HEK293T (cell line): ENCODE measurements at regions of chr2 and their contacts with region 1.

Region 1: DNA sequence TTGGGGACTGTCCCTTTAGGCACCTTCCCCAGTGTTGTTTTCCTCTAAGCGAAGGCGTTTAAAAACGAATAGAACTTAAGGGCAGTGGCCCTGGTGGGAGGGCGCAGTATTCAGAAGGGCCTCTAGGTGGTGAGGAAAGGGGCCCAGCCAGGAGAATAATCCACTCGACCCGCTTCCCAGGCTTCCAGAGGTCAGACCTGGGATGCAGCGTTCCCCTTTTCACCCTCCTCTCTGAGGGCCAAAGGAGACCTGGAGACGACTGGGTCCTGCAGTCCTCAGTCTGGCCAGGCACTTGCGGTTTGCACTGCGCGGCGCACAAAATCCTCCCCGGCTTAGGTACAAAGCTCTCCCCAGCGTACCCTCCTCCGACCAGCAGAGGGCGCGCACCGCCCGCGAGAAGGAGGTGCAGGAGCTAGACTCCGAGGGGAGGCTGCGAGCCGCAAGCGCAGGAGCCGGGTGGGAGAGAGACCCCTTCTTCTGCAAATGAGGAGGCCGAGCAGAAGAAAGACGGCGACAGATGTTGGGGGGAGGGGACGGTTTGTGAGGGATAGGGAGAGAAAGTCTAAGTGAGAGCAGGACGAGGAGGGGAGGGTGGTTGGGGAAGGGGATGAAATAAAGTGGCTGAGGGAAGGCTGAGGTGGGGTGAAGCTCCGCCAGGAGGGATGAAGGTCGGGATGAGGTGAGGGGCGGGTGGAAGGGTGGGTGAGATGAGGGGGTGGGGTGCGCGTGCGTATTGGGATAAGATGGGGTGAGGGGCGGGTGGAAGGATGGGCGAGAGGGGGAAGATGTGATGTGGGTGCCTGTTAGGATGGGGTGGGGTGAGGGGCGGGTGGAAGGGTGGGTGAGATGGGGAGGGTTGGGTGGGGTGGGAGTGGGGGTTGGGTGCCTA is 4.9 kb downstream of the FEV start:
- DNase-seq: peak; percentile 88

Region 2: DNA sequence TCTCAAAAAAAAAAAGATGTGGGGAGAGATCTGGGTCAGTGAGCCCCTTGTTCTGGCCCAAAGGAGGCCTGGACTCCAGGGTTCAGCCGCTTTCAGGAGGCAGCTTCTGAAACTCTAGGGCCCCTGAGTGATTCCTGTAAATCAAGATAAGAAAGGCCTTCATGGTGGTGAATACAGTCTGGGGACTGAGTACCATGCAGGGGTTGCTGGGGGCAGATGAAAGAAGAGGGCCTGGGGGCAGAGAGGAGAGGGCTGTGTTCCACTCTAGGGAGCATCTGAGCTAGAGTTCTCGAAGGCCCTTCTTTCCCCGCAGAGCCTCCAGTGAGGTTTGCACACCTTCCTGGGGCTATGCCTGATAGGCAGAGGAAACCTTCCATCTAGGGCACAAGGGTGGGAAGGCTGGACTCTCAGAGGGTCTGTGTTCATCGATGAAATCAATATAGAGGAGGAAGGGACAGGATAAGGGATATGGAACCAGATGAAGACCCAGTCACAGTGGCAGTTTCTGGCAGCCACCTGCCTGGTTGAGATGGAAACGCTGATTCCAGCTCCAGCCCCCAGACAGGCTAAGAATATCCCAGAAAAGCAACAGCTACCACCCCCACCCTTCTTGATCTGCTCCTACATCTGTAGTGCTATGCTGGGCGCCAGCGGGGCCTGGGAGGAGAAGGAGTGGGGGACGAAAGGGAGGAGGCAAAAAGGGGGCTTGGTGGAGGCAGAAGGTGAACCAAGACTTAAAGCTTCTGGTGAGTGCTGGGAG is 25.4 kb before region 1 on chr2:
- CTCF ChIA-PET with region 1: interaction called, 10 read pairs
- POLR2A ChIA-PET with region 1: interaction called, 5 read pairs
- DNase-seq: no peak

Region 3: DNA sequence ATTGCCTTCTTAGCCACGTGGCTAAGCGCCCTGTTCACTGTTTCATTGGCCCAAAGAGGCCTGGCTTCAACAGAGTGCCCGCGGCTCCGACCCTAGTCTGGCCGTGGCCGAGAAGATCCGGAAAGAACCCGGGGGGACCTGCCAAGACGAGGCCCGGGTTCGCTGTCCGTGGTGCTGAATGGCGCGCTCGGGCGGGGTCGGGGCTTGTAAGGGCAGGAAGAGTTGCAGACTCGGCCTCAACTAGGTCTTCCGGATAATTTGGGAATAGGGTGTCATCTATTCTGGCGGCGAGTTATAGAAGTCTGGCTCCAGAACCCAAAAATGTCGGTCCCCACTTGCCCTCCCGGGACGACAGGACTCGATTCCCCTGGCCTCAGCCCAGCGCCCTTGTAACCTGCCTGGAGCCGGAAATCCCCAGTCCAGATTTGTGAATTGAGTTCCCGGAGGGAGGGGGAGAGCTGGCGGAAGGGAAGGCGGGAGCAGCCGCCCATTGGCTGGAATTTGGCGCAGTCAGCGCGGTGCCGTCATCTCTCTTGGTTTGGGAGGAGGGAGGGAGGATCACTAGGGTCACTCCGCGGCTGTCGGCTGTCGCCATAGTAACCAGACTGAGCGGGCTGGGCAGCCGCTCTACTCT is 17.1 kb before region 1 on chr2:
- CTCF ChIA-PET with region 1: interaction called, 11 read pairs
- POLR2A ChIA-PET with region 1: interaction called, 5 read pairs
- DNase-seq: peak; percentile 70

Region 4: DNA sequence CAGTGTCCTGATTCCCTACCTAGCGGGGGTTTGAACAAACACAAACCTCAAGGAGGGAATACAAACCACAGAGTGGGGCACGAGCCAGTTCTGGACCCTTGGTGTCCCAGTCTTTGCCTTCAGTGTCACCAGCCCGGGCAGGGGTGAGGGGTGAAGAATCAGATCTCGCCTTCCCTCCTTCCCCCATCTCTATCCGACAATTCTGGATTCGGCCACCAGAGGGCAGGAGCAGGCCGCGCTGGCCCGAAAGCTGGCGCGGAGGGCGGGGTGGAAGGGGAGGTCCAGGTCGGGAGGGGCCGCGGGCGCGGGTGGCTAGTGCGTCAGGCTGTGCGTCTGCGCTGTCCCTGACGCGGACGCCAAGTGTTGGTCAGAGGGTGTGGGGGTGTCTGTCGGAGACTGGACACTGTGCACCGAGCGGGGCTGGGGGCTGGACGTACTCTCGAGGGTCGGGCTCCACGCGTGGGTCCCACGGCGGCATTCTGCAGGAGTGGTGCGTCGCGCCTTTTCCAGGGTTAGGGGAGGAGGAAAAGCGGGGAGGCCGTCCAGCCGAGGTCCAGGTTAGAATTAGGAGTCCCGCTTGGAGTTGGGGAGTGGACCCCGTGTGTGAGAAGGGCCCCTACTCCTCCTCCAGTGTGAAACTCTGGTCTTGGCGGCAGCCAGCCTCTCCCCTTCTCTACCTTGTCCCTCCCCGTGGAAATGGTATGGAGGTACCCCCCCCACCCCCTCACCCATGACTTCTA is 16.1 kb after region 1 on chr2:
- CTCF ChIA-PET with region 1: interaction called, 21 read pairs
- POLR2A ChIA-PET with region 1: no interaction called
- DNase-seq: peak; percentile 94

Region 5: DNA sequence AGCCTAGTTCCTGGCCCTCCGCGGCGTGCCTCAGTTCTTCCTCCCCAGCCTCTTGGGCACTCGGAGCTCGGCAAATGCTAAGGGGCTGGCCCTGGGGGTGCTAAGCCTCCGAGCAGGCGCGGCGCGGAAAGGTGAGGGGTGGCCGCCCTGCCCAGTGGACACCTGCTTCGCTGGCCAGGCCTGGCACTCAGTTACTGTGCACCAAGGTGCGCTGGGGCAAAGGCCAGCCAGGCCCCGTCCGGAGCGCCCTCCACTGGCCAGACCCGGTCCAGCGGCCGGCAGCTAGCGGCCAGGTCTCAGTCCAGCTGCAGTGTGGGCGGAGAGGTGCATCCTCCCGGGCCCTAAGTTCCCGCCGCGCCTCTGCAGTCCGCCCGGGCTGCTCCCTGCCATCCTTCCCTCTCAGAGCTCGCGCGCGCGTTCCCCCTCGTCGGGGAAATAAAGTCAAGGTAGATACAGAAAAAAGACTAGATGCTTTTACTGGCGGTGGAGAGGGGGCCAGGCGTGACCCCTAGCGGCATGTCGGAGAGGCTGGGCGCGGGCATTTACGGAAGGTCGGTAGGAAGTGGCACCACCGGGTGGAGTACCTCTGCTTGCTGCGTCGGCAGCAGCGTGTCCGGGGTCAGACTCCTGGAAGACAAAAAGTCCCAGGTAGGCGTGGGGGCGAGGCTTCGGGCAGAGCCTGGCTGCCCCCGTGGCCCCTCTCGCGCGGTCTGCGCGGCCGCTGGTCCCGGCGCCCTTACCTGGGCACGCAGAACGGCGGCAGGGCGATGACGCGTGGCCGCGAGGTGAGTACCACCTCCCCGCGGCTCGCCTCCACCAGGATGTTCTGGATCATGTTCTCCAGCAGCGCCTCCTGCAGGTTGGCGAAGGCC is 22.5 kb after region 1 on chr2:
- CTCF ChIA-PET with region 1: interaction called, 16 read pairs
- POLR2A ChIA-PET with region 1: interaction called, 3 read pairs
- DNase-seq: peak; percentile 93